ENCODE measurements at regions of chr1 and their contacts with region 1.

Region 1: DNA sequence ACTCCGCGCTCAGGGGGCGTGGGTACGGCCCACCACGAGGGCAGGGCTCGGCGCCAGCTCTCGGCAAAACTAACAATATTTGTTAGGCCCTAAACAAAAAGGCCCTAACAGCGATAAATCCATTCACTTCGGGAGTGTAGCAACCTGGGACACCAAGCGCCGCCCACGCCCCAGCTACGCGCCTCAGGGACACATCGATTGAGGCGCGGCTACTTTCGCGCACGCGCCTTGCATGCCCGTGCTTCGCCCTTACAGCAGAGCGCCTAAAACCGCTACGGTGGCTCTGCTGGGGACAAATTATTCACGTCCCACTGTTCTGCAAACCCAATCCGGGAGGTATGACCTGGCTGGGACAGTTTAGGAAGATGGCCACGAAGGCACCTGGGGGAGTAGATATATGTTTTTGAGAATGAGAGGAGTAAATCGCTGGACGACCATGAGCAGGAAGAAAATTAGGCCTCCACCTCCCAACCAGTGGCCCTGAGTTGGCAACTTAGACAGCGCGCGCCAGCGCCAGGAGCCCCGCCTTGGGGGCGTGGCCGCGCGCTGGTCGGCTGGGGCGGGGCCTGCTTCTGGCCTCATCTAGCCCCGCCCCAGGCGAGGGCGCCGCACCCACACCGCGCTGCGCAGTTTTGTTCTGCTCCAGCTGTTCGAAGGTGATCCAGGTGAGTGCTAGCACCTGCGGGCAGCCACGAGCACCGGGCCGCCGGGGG is at the start of gene MGST3:
- DNase-seq: peak; percentile 99
- ATAC-seq: peak; percentile 91
- H3K4me3 Mint-ChIP-seq: no peak within 1 kb of the TSS
- H3K27ac Mint-ChIP-seq: no peak within 1 kb of the TSS
- H3K4me1 Mint-ChIP-seq: peaks cover 17% of the 10 kb centered on the region
- H3K27me3 Mint-ChIP-seq: no peaks in the 10 kb centered on the region
- total RNA-seq, gene MGST3: 49.1 to 52.1 TPM

Region 2: DNA sequence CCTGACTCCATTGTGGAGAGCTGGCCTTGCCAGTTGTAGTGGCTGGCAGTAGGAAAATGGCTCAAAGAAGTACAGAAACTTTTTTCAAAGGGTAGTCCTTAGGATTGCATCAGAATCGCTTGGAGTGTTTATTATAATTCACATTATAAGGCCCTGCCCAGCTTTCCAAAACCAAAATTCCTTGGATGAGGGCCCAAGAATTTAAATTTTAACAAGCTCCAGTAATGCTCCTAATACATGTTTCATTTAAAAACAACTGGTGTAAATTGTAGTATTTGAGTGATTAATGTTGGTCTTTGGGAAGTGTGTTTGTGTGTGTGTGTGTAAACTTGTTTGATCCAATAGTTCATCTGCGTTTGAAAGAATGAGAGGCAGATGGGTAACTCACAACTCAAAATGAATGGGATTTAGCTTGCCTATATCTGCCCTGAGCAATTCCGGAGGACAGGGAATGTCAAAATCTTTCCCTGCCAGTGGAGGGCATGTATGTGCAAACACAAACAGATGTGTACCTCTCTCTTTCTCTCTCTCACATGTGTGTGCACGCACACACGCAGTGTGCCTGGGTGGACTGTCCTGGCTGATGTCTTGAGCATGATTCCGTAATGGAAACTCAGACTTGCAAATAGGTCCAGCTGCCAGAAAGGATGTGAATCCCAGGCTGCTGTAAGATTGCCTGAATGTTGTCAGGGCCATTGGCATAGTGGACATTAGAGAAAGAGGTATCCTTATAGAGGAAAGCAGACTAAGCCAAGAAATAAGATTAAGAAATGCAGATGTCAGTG is 567.4 kb before region 1 on chr1:
- CTCF ChIA-PET with region 1: no interaction called
- POLR2A ChIA-PET with region 1: no interaction called
- intact Hi-C with region 1: no loop called
- DNase-seq: no peak
- ATAC-seq: no peak
- H3K4me3 Mint-ChIP-seq: no peak overlapping the region
- H3K27ac Mint-ChIP-seq: no peak overlapping the region
- H3K4me1 Mint-ChIP-seq: no peaks in the 10 kb centered on the region
- H3K27me3 Mint-ChIP-seq: peaks cover 2% of the 10 kb centered on the region

Region 3: DNA sequence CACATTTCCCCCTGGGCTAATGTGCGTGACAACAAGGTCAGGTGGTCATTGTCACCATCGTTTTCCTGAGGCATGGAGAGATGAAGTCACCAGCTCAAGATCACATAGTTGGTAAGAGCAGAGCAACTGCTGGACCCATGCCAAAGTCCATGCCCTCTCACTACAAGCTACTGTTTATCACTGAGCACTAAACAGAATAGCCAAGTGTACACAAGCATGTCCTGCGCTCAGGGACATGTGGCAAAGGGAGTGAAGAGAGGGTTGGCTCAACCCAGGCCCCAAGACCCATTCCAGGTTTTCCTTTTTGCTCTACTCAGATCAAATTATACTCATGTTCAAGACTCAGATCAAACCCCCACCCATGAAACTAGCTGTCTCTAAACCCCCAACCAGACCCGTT is 66.2 kb before region 1 on chr1:
- CTCF ChIA-PET with region 1: no interaction called
- POLR2A ChIA-PET with region 1: no interaction called
- intact Hi-C with region 1: no loop called
- DNase-seq: no peak
- ATAC-seq: no peak
- H3K4me3 Mint-ChIP-seq: no peak overlapping the region
- H3K27ac Mint-ChIP-seq: no peak overlapping the region
- H3K4me1 Mint-ChIP-seq: no peaks in the 10 kb centered on the region
- H3K27me3 Mint-ChIP-seq: peaks cover 34% of the 10 kb centered on the region

Region 4: GRCh38 chr1:165645654-165646366 is 15.0 kb after region 1 on chr1:
- CTCF ChIA-PET with region 1: no interaction called
- POLR2A ChIA-PET with region 1: interaction called, 3 read pairs
- intact Hi-C with region 1: loop called in 1 of 2 experiments (anchors 2 kb)
- DNase-seq: peak; percentile 36
- ATAC-seq: peak; percentile 64
- H3K4me3 Mint-ChIP-seq: no peak overlapping the region
- H3K27ac Mint-ChIP-seq: no peak overlapping the region
- H3K4me1 Mint-ChIP-seq: peaks cover 26% of the 10 kb centered on the region
- H3K27me3 Mint-ChIP-seq: no peaks in the 10 kb centered on the region

Region 5: DNA sequence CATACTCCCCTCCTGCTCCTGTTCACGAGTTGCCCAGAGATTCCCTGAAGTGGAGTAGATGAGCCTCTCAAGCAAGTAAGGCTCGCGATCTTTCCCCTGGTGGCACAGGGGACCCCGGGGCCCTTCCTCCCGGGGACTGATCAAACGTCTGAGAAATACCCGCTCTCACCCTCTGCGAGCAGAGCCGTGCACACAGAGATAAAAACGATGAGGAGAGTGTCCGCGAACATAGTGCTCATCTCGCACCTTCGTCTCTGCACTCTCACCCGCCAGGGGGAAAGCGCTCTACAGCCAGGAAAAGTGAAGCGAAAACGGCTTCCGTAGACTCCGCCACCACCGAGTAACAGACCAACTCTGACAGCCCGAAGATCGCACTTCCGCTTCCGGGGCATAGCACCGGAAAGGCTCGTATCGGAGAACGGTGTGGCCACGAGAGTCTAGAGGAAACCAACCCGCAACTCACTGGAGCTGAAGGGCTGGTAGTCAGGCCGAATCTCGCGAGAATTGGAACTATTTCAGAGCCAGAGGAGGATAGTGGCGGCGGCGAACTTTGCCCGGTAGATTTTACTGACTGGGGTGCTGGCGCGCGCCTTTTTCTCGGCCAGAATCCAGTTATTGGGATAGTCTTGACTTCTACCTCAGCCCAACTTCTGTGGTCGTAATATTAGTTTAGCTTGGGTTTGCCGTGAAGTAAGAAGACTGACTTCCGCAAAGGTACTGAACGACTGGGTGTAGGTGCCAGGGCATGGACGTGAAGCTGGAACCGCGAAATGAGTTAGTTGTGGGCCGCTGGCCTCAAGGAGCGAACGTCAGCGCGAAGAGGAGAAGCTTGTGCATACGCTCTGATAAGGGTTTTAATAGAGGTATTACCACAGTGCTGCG is 138.0 kb after region 1 on chr1 and contains the start of gene TMCO1:
- CTCF ChIA-PET with region 1: interaction called, 3 read pairs
- POLR2A ChIA-PET with region 1: interaction called, 5 read pairs
- intact Hi-C with region 1: loop called (anchors 1 to 5 kb)
- DNase-seq: peak; percentile 96
- ATAC-seq: peak; percentile 99
- H3K4me3 Mint-ChIP-seq: peak within 1 kb of the TSS; percentile 92
- H3K27ac Mint-ChIP-seq: peak within 1 kb of the TSS; percentile 99
- H3K4me1 Mint-ChIP-seq: peaks cover 54% of the 10 kb centered on the region
- H3K27me3 Mint-ChIP-seq: no peaks in the 10 kb centered on the region
- total RNA-seq, gene TMCO1: 57.7 to 70.5 TPM

Region 6: GRCh38 chr1:166166695-166167571 is 536.1 kb after region 1 on chr1 and contains the start of gene FAM78B:
- CTCF ChIA-PET with region 1: no interaction called
- POLR2A ChIA-PET with region 1: no interaction called
- intact Hi-C with region 1: loop called in 1 of 2 experiments (anchors 1 kb)
- DNase-seq: peak; percentile 74
- ATAC-seq: peak; percentile 35
- H3K4me3 Mint-ChIP-seq: peak within 1 kb of the TSS; percentile 69
- H3K27ac Mint-ChIP-seq: no peak within 1 kb of the TSS
- H3K4me1 Mint-ChIP-seq: peaks cover 29% of the 10 kb centered on the region
- H3K27me3 Mint-ChIP-seq: peaks cover 31% of the 10 kb centered on the region
- total RNA-seq, gene FAM78B: 0.34 to 0.51 TPM

Region 7: GRCh38 chr1:166875734-166876539 is 1245.2 kb after region 1 on chr1 and contains the start of gene TADA1:
- CTCF ChIA-PET with region 1: no interaction called
- POLR2A ChIA-PET with region 1: no interaction called
- intact Hi-C with region 1: loop called in 1 of 2 experiments (anchors 5 kb)
- DNase-seq: peak; percentile 100
- ATAC-seq: peak; percentile 91
- H3K4me3 Mint-ChIP-seq: peak within 1 kb of the TSS; percentile 92
- H3K27ac Mint-ChIP-seq: peak within 1 kb of the TSS; percentile 97
- H3K4me1 Mint-ChIP-seq: peaks cover 45% of the 10 kb centered on the region
- H3K27me3 Mint-ChIP-seq: no peaks in the 10 kb centered on the region
- total RNA-seq, gene TADA1: 16.0 to 19.5 TPM

Region 8: GRCh38 chr1:167517535-167518330 is 1886.9 kb after region 1 on chr1:
- CTCF ChIA-PET with region 1: no interaction called
- POLR2A ChIA-PET with region 1: no interaction called
- intact Hi-C with region 1: loop called in 1 of 2 experiments (anchors 10 kb)
- DNase-seq: peak; percentile 97
- ATAC-seq: peak; percentile 88
- H3K4me3 Mint-ChIP-seq: peak overlapping the region; percentile 90
- H3K27ac Mint-ChIP-seq: peak overlapping the region; percentile 99
- H3K4me1 Mint-ChIP-seq: peaks cover 43% of the 10 kb centered on the region
- H3K27me3 Mint-ChIP-seq: no peaks in the 10 kb centered on the region